Vagina (tissue), 2 donors: ENCODE measurements at regions of chr7 and their contacts with region 1.

Region 1: GRCh38 chr7:35289372-35289771 is 35.5 kb upstream of the TBX20 start:
- DNase-seq: no peak
- H3K4me3 ChIP-seq: no peak overlapping the region
- H3K27ac ChIP-seq: no peak overlapping the region
- H3K4me1 ChIP-seq: no peaks in the 10 kb centered on the region
- H3K27me3 ChIP-seq: no peaks in the 10 kb centered on the region
- CTCF ChIP-seq: no peak
- POLR2A ChIP-seq: no peak

Region 2: DNA sequence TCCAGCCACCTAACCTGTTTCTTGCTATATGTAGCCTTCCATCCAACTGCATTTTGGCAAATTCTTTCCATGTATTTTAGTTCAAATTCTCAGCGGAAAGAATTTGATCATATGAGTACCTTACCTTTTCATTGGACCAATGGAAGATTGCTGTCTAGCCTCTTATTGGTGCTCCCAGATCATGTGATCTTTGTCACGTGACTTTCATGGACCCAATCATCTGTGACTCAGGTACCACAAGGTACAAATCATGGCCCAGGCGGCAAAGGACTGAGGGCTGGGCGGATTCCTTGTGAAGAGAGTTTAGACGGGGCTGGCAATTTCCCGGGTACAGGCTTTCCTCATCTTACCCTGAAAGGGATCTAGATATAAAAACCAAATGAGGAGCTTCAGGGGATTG is 50.4 kb after region 1 on chr7:
- intact Hi-C with region 1: loop called (anchors 2 kb)
- DNase-seq: peak in 1 of 2 donors; percentile 20
- H3K4me3 ChIP-seq: no peak overlapping the region
- H3K27ac ChIP-seq: no peak overlapping the region
- H3K4me1 ChIP-seq: no peaks in the 10 kb centered on the region
- H3K27me3 ChIP-seq: no peaks in the 10 kb centered on the region
- CTCF ChIP-seq: no peak
- POLR2A ChIP-seq: no peak